ENCODE measurements at regions of chr1 and their contacts with region 1.

Region 1: DNA sequence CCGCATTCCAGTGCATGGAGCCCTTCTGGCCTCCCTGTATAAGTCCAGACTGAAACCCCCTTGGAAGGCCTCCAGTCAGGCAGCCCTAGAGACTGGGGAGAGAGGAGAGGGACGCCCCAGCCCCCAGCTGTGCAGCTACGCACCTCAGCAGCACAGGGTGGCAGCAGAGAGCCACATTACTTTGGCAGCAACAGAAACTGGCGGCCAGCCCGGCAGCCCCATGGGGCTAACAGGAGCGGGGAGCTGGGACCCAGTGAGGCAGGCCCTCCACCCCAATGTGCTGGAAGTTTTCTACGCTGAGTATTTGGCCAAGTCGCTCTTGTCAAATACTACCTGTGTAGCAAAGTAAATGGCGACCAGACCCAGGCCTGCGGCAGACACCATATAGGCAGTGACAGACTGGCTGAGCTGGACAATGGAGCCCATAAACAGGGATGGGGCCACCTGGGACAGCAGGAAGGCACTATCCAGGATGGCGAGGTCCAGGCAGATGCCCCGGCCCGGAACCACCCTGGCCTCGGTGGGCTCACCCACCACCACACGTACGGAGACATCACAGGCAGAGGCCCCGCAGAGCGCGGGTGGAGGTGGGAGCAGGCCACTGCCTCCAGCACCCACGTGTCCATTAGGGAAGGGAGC is 21.2 kb downstream of the SLC45A3 start:
- DNase-seq: no peak
- ATAC-seq: peak; percentile 87
- H3K4me3 ChIP-seq: no peak overlapping the region
- H3K27ac ChIP-seq: no peak overlapping the region
- H3K4me1 ChIP-seq: peaks cover 2% of the 10 kb centered on the region
- H3K27me3 ChIP-seq: no peaks in the 10 kb centered on the region
- CTCF ChIP-seq: peak; percentile 93

Region 2: DNA sequence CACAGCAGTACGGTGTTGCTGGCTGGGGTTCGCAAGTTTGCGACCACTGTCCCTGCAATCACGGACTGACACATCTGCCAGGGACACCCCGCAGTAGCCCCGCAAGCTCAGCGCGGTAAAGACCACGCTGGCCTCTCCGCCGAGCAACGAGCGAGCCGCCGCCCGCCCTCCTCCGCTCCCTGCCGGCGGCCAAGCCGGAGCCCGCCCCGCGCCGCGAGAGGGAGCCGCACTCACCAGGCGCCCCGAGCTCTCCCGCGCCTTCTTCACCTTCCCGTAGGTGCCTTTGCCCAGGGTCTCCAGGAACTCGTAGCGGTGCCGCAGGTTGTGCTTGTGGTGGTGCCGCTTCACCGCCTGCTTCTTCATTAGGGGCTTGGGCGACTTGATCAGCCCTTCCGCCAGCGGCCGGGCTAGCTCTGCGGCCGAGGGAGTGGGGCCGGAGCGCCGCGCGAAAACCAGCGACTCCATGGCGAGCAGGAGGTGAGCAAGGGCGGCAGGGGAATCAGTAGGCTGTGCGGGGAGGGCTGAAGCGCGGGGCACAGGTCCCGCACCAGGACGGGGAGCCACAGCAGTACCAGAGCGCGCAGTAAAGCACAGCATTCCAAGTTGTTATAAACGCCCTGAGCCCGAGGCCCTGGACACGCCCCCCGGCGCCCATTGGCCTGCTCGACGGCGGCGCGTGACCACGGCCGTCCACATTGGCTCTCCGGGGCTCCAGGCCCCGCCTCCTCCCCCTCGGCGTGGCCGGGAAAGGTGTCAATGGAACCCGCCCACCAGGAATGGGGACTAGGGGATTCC is 337.7 kb before region 1 on chr1 and contains the start of gene NUAK2:
- CTCF ChIA-PET with region 1: interaction called, 10 read pairs
- POLR2A ChIA-PET with region 1: no interaction called
- in situ Hi-C with region 1: no loop called
- intact Hi-C with region 1: no loop called
- DNase-seq: no peak
- ATAC-seq: peak; percentile 89
- H3K4me3 ChIP-seq: peak within 1 kb of the TSS; percentile 88 to 89
- H3K27ac ChIP-seq: peak within 1 kb of the TSS; percentile 72
- H3K4me1 ChIP-seq: peaks cover 40% of the 10 kb centered on the region
- H3K27me3 ChIP-seq: no peaks in the 10 kb centered on the region
- CTCF ChIP-seq: peak; percentile 58; the same call in 1 of the 2 replicates
- total RNA-seq, gene NUAK2: 17.4 TPM

Region 3: GRCh38 chr1:205430696-205431305 is 228.3 kb before region 1 on chr1:
- CTCF ChIA-PET with region 1: no interaction called
- POLR2A ChIA-PET with region 1: no interaction called
- in situ Hi-C with region 1: no loop called
- intact Hi-C with region 1: no loop called
- DNase-seq: peak; percentile 20
- ATAC-seq: peak; percentile 79
- H3K4me3 ChIP-seq: peak overlapping the region; percentile 48 to 64
- H3K27ac ChIP-seq: no peak overlapping the region
- H3K4me1 ChIP-seq: peaks cover 4% of the 10 kb centered on the region; the same call in 1 of the 2 replicates
- H3K27me3 ChIP-seq: peaks cover 3% of the 10 kb centered on the region
- CTCF ChIP-seq: peak; percentile 96

Region 4: GRCh38 chr1:205528887-205529825 is 129.9 kb before region 1 on chr1:
- CTCF ChIA-PET with region 1: interaction called, 17 read pairs
- POLR2A ChIA-PET with region 1: no interaction called
- in situ Hi-C with region 1: no loop called
- intact Hi-C with region 1: loop called (anchors 2 kb)
- DNase-seq: no peak
- ATAC-seq: peak; percentile 89
- H3K4me3 ChIP-seq: peak overlapping the region; percentile 20 to 33; a peak in 3 of 4 replicates
- H3K27ac ChIP-seq: no peak overlapping the region
- H3K4me1 ChIP-seq: peaks cover 11% of the 10 kb centered on the region
- H3K27me3 ChIP-seq: no peaks in the 10 kb centered on the region
- CTCF ChIP-seq: peak; percentile 98

Region 5: GRCh38 chr1:205631727-205632373 is 27.2 kb before region 1 on chr1 and contains the start of gene ELK4:
- CTCF ChIA-PET with region 1: interaction called, 13 read pairs
- POLR2A ChIA-PET with region 1: interaction called, 3 read pairs
- in situ Hi-C with region 1: no loop called
- intact Hi-C with region 1: no loop called
- DNase-seq: peak; percentile 84
- ATAC-seq: peak; percentile 98
- H3K4me3 ChIP-seq: peak within 1 kb of the TSS; percentile 84 to 94
- H3K27ac ChIP-seq: peak within 1 kb of the TSS; percentile 95
- H3K4me1 ChIP-seq: peaks cover 18% of the 10 kb centered on the region
- H3K27me3 ChIP-seq: no peaks in the 10 kb centered on the region
- CTCF ChIP-seq: peak; percentile 88
- total RNA-seq, gene ELK4: 54.6 TPM

Region 6: DNA sequence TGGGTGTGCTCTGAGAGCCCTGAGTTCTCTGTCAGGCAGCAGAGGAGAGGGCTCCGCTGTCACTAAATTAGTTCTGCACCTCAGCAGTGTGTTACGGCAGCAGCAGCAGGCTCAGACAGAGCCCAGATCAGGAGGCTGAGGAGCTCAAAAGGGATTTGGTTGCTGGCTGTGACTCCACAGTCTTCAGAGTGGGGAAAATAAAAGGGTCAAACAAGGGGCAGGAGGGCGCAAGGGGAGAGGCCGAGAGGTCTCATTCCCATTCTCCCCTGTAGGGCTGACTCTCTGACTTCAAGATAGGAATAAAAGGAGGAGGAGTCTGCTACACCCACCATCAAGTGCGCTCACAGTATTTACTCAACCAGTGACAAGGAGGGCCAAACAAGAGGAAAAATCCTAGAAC is 30.4 kb after region 1 on chr1:
- CTCF ChIA-PET with region 1: no interaction called
- POLR2A ChIA-PET with region 1: no interaction called
- in situ Hi-C with region 1: no loop called
- intact Hi-C with region 1: no loop called
- DNase-seq: no peak
- ATAC-seq: no peak
- H3K4me3 ChIP-seq: no peak overlapping the region
- H3K27ac ChIP-seq: no peak overlapping the region
- H3K4me1 ChIP-seq: no peaks in the 10 kb centered on the region; the same call in 1 of the 2 replicates
- H3K27me3 ChIP-seq: no peaks in the 10 kb centered on the region
- CTCF ChIP-seq: no peak

Region 7: DNA sequence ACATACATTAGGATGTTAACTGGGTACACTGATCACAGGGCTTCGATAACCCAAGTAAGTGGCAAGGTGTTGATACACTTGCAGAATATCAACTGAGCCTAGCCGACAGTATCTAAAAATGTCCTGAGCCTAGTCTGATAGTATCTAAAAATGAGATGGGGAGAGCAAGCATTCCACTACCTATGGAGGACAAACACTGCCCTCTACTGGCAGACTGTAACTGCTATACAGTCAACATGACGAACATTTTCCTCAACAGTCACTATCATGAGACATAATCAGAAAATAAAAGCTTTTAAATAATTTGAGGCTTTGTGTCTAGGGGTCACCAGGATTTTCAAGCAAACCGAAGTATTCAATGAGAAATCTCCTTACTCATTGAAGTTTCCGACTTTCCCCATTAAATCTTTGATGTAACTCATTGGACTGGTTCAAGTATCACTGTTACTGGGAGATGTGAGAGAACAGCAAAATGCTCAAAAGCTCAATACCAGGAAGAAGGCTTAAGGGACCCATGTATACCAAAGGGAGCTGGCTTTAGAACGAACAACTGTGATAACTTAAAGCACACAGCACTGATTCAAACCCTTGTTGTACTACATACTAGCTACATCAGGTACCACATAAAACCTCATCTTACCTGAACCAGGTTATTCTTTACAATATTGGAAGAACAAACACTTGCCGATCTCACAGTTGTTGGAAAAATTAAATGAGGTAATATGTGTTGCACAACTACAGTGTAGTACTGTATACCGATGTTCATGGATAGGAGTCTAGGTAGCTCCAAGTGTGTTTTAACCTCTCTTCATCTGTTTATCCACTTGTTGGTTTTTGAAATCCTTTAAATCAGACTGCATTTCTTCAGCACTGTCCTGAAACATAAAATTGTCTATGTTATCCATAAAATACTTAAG is 52.3 kb after region 1 on chr1:
- CTCF ChIA-PET with region 1: interaction called, 71 read pairs
- POLR2A ChIA-PET with region 1: interaction called, 15 read pairs
- in situ Hi-C with region 1: no loop called
- intact Hi-C with region 1: loop called (anchors 2 kb)
- DNase-seq: peak; percentile 70
- ATAC-seq: peak; percentile 89
- H3K4me3 ChIP-seq: no peak overlapping the region
- H3K27ac ChIP-seq: peak overlapping the region; percentile 23; the same call in 1 of the 2 replicates
- H3K4me1 ChIP-seq: peaks cover 6% of the 10 kb centered on the region; the same call in 1 of the 2 replicates
- H3K27me3 ChIP-seq: no peaks in the 10 kb centered on the region
- CTCF ChIP-seq: peak; percentile 87

Region 8: GRCh38 chr1:205739348-205740160 is 80.5 kb after region 1 on chr1:
- CTCF ChIA-PET with region 1: no interaction called
- POLR2A ChIA-PET with region 1: no interaction called
- in situ Hi-C with region 1: no loop called
- intact Hi-C with region 1: no loop called
- DNase-seq: no peak
- ATAC-seq: no peak
- H3K4me3 ChIP-seq: no peak overlapping the region
- H3K27ac ChIP-seq: no peak overlapping the region
- H3K4me1 ChIP-seq: peaks cover 19% of the 10 kb centered on the region; the same call in 1 of the 2 replicates
- H3K27me3 ChIP-seq: no peaks in the 10 kb centered on the region
- CTCF ChIP-seq: no peak; the same call in 1 of the 2 replicates

Region 9: GRCh38 chr1:205772607-205773032 is 113.6 kb after region 1 on chr1:
- CTCF ChIA-PET with region 1: interaction called, 21 read pairs
- POLR2A ChIA-PET with region 1: no interaction called
- in situ Hi-C with region 1: no loop called
- intact Hi-C with region 1: no loop called
- DNase-seq: no peak
- ATAC-seq: no peak
- H3K4me3 ChIP-seq: no peak overlapping the region
- H3K27ac ChIP-seq: no peak overlapping the region
- H3K4me1 ChIP-seq: peaks cover 9% of the 10 kb centered on the region
- H3K27me3 ChIP-seq: no peaks in the 10 kb centered on the region
- CTCF ChIP-seq: no peak

Region 10: GRCh38 chr1:205832326-205832751 is 173.3 kb after region 1 on chr1:
- CTCF ChIA-PET with region 1: no interaction called
- POLR2A ChIA-PET with region 1: no interaction called
- in situ Hi-C with region 1: no loop called
- intact Hi-C with region 1: no loop called
- DNase-seq: no peak
- ATAC-seq: no peak
- H3K4me3 ChIP-seq: no peak overlapping the region
- H3K27ac ChIP-seq: no peak overlapping the region
- H3K4me1 ChIP-seq: no peaks in the 10 kb centered on the region
- H3K27me3 ChIP-seq: peaks cover 4% of the 10 kb centered on the region
- CTCF ChIP-seq: no peak

Measured in Panc1 (cell line).